ENCODE measurements at regions of chr17 and their contacts with region 1.

Region 1: GRCh38 chr17:81959362-81960129 is 1.4 kb downstream of the NOTUM start:
- DNase-seq: peak; percentile 82
- H3K4me3 Mint-ChIP-seq: no peak overlapping the region
- H3K27ac Mint-ChIP-seq: no peak overlapping the region
- H3K4me1 Mint-ChIP-seq: peaks cover 6% of the 10 kb centered on the region
- H3K27me3 Mint-ChIP-seq: peaks cover 75% of the 10 kb centered on the region

Region 2: GRCh38 chr17:81890447-81891299 is 68.9 kb before region 1 on chr17:
- CTCF ChIA-PET with region 1: no interaction called
- DNase-seq: peak; percentile 59
- H3K4me3 Mint-ChIP-seq: peak overlapping the region; percentile 87
- H3K27ac Mint-ChIP-seq: peak overlapping the region; percentile 98
- H3K4me1 Mint-ChIP-seq: peaks cover 42% of the 10 kb centered on the region
- H3K27me3 Mint-ChIP-seq: no peaks in the 10 kb centered on the region

Region 3: DNA sequence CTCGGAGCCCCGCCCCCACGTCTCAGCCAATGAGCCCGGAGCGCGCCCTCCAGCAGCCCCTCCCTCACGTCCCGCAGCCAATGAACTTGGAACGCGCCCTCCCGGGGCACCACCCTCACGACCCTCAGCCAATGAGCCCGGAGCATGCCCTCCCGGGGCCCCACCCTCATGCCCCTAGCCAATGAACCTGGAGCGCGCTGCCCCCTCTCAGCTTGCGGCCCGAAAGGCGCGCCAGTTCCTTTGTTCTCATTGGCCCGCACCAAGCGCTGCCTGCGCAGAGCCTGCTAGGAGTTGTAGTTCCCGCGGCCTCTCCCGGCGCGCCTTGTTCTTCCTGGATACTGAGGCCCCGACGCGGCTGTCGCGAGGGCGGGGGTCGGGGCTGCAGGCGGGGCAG is 63.4 kb after region 1 on chr17 and contains the start of gene LRRC45:
- CTCF ChIA-PET with region 1: interaction called, 103 read pairs
- DNase-seq: peak; percentile 100
- H3K4me3 Mint-ChIP-seq: peak within 1 kb of the TSS; percentile 83
- H3K27ac Mint-ChIP-seq: peak within 1 kb of the TSS; percentile 81
- H3K4me1 Mint-ChIP-seq: peaks cover 49% of the 10 kb centered on the region
- H3K27me3 Mint-ChIP-seq: no peaks in the 10 kb centered on the region

Region 4: GRCh38 chr17:82037113-82037888 is 77.8 kb after region 1 on chr17 and contains the start of gene DCXR:
- CTCF ChIA-PET with region 1: interaction called, 10 read pairs
- DNase-seq: peak; percentile 99
- H3K4me3 Mint-ChIP-seq: peak within 1 kb of the TSS; percentile 87
- H3K27ac Mint-ChIP-seq: peak within 1 kb of the TSS; percentile 98
- H3K4me1 Mint-ChIP-seq: peaks cover 28% of the 10 kb centered on the region
- H3K27me3 Mint-ChIP-seq: peaks cover 29% of the 10 kb centered on the region

Measured in activated naive CD4-positive, alpha-beta T cell treated with anti-CD3 and anti-CD28 coated beads, Interleukin-2, amount 10 ng/mL, durations not matched to agents 7 days and 5 days (primary cell).